Mammary epithelial cell (primary cell): ENCODE measurements at regions of chr5 and their contacts with region 1.

Region 1: GRCh38 chr5:1470762-1471211 is 25.5 kb upstream of the SLC6A3 start:
- DNase-seq: no peak
- H3K4me3 ChIP-seq: no peak overlapping the region
- H3K27ac ChIP-seq: no peak overlapping the region
- H3K4me1 ChIP-seq: peaks cover 8% of the 10 kb centered on the region
- H3K27me3 ChIP-seq: no peaks in the 10 kb centered on the region
- CTCF ChIP-seq: no peak

Region 2: GRCh38 chr5:1401536-1402138 is 69.2 kb before region 1 on chr5:
- CTCF ChIA-PET with region 1: no interaction called
- dilution Hi-C with region 1: loop called (anchors 5 kb)
- in situ Hi-C with region 1: no loop called
- intact Hi-C with region 1: no loop called
- DNase-seq: no peak
- H3K4me3 ChIP-seq: no peak overlapping the region
- H3K27ac ChIP-seq: no peak overlapping the region
- H3K4me1 ChIP-seq: no peaks in the 10 kb centered on the region
- H3K27me3 ChIP-seq: no peaks in the 10 kb centered on the region
- CTCF ChIP-seq: no peak

Region 3: GRCh38 chr5:1511651-1512540 is 41.1 kb after region 1 on chr5:
- CTCF ChIA-PET with region 1: no interaction called
- dilution Hi-C with region 1: loop called (anchors 5 kb)
- in situ Hi-C with region 1: no loop called
- intact Hi-C with region 1: no loop called
- DNase-seq: peak; percentile 47
- H3K4me3 ChIP-seq: no peak overlapping the region
- H3K27ac ChIP-seq: no peak overlapping the region
- H3K4me1 ChIP-seq: peaks cover 22% of the 10 kb centered on the region
- H3K27me3 ChIP-seq: no peaks in the 10 kb centered on the region
- CTCF ChIP-seq: peak in 1 of 2 donors; percentile 44

Region 4: DNA sequence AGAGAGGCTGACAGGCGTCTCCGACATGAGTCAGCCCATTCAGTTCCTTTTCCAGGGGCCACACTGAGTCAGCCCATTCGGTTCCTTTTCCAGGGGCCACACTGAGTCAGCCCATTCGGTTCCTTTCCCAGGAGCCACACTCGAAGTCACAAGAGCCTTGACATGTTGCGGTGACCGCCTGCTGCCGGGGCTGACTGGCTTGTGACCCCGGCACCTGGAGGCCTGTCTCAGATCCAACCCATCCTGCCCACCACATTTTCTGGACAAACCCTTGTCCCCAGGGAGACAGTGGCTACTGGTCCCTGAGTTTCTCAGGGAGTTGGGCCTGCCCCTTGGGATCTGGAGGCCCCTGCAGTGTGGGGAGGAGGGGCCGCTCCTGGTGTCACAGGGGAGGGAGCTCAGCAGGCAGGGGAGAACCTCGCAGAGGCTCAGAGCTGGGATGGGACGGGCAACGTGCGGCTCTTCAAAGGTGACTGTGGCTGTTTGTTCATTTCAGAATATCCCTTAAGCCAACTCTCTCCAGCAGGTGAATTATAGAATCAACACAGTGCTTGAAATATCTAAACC is 93.5 kb after region 1 on chr5:
- CTCF ChIA-PET with region 1: no interaction called
- dilution Hi-C with region 1: no loop called
- in situ Hi-C with region 1: no loop called
- intact Hi-C with region 1: no loop called
- DNase-seq: peak; percentile 23
- H3K4me3 ChIP-seq: no peak overlapping the region
- H3K27ac ChIP-seq: no peak overlapping the region
- H3K4me1 ChIP-seq: no peaks in the 10 kb centered on the region
- H3K27me3 ChIP-seq: peaks cover 4% of the 10 kb centered on the region
- CTCF ChIP-seq: no peak